Heart right ventricle (tissue), 16 donors: ENCODE measurements at regions of chr12 and their contacts with region 1.

Region 1: DNA sequence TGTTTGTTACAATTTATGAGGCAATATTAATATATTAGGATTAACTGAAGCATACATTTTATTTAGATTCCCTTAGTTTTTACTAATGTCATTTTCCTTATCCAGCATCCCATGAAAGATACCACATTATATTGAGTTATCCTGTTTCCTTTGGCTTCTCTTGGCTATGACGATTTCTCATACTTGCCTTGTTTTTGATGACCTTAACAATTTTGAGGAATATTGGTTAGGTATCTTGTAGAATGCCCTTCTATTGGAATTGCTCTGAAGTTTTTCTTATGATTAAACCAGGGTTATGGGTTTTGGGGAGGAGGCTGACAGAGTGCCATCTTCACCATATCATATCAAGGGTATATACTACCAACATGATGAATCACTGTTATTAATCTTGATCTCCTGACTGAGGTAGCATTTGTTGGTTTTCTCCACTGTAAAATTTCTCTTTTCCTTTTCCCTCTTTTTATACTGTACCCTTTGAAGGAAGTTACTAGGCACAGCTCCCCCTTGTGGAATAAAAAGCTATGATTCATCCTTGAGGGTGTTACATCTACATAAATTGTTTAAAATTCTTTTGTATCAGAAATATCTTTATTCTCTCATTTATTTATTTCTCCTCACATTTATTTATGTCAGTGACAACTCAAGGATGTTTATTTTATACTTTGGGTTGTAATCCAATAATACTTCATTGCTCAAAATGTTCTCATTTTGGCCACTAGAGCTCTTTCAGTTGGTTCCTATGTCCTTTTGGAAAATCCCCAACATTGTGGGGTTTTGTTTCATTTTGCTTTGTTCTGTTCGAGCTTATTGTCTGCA is 239.0 kb downstream of the SLC16A7 start:
- DNase-seq: no peak
- ATAC-seq: no peak
- H3K4me3 ChIP-seq: no peak overlapping the region
- H3K27ac ChIP-seq: no peak overlapping the region
- H3K4me1 ChIP-seq: no peaks in the 10 kb centered on the region
- H3K27me3 ChIP-seq: no peaks in the 10 kb centered on the region
- CTCF ChIP-seq: peak; percentile 24 to 70 (median 61)

Region 2: DNA sequence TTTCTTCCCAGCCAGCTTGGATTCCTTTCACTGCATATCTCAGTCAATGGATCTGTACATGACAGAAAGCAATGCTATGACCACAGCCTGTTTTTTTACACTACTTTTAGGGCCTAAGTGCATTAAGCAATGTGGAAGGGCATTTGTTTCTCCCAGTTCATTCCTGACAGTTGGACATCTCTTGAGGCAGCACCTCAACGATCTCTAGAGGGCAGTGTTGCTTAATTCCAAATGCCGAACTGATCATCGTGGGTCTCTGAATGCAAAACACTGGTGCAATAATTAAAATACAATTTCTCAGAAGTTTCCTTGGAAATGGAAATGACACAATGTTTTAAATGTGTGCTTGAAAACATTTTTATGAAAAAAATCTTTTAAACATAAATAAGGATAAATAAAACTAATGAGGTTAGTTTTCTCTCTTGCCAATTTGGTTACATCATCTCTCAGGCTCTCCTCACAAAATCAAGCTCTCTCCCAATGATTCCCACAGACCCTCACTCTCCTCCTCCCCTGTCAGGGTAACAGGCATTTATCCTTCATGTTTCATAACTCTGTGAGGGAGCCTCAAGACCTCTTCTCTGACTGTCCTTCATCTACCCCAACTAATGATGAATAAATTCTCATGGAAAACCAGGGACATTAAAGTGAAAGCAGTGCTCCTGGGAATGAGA is 431.5 kb before region 1 on chr12:
- intact Hi-C with region 1: loop called in 1 of 10 experiments (anchors 10 kb)
- DNase-seq: peak in 1 of 2 donors; percentile 41
- ATAC-seq: peak in 7 of 8 donors; percentile 54 to 79 (median 74)
- H3K4me3 ChIP-seq: peak overlapping the region in 2 of 10 donors; percentile 11 to 22
- H3K27ac ChIP-seq: no peak overlapping the region
- H3K4me1 ChIP-seq: peaks cover 0 to 8% (median 0%) of the 10 kb centered on the region in 9 donors
- H3K27me3 ChIP-seq: no peaks in the 10 kb centered on the region
- CTCF ChIP-seq: peak; percentile 49 to 82 (median 77)

Region 3: GRCh38 chr12:59431266-59431665 is 403.6 kb before region 1 on chr12:
- intact Hi-C with region 1: loop called in 1 of 10 experiments (anchors 10 kb)
- DNase-seq: no peak
- ATAC-seq: no peak
- H3K4me3 ChIP-seq: no peak overlapping the region
- H3K27ac ChIP-seq: no peak overlapping the region
- H3K4me1 ChIP-seq: no peaks in the 10 kb centered on the region
- H3K27me3 ChIP-seq: no peaks in the 10 kb centered on the region
- CTCF ChIP-seq: peak in 6 of 9 donors; percentile 17 to 46 (median 33)

Region 4: GRCh38 chr12:59444932-59445331 is 389.9 kb before region 1 on chr12:
- intact Hi-C with region 1: loop called in 4 of 10 experiments (anchors 10 kb)
- DNase-seq: no peak
- ATAC-seq: no peak
- H3K4me3 ChIP-seq: no peak overlapping the region
- H3K27ac ChIP-seq: no peak overlapping the region
- H3K4me1 ChIP-seq: no peaks in the 10 kb centered on the region
- H3K27me3 ChIP-seq: no peaks in the 10 kb centered on the region
- CTCF ChIP-seq: peak in 8 of 9 donors; percentile 17 to 58 (median 46)

Region 5: DNA sequence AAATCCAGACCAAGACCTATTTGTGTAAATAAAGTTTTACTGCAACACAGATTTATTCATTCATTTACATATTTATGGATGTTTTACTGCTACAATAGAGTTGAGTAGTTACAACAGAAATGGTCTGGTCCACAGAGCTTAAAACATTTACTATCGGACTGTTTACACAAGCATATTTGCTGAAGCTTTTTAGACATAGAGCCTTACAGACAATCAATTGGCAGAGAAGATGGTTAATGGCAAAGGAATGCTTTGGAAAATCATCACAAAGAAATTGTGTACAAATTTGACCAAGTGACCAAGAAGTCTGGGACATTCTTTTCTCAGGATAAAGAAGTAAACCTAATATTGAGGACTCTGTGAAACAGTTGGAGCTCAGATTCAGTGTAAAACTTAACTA is 265.3 kb after region 1 on chr12:
- intact Hi-C with region 1: no loop called
- DNase-seq: no peak
- ATAC-seq: no peak
- H3K4me3 ChIP-seq: no peak overlapping the region
- H3K27ac ChIP-seq: no peak overlapping the region
- H3K4me1 ChIP-seq: no peaks in the 10 kb centered on the region
- H3K27me3 ChIP-seq: no peaks in the 10 kb centered on the region
- CTCF ChIP-seq: no peak